ENCODE measurements at regions of chr17 and their contacts with region 1.

Region 1: GRCh38 chr17:79818026-79818758 is 21.0 kb downstream of the CBX4 start:
- DNase-seq: peak; percentile 69
- H3K4me3 ChIP-seq: no peak overlapping the region
- H3K27ac ChIP-seq: no peak overlapping the region
- H3K4me1 ChIP-seq: peaks cover 15% of the 10 kb centered on the region
- CTCF ChIP-seq: peak; percentile 27; the same call in 1 of the 2 replicates

Region 2: GRCh38 chr17:79728226-79728907 is 89.8 kb before region 1 on chr17:
- CTCF ChIA-PET with region 1: no interaction called
- POLR2A ChIA-PET with region 1: no interaction called
- intact Hi-C with region 1: no loop called
- DNase-seq: peak; percentile 94
- H3K4me3 ChIP-seq: no peak overlapping the region
- H3K27ac ChIP-seq: no peak overlapping the region
- H3K4me1 ChIP-seq: peaks cover 20% of the 10 kb centered on the region
- CTCF ChIP-seq: no peak

Region 3: GRCh38 chr17:79839363-79840268 is 21.4 kb after region 1 on chr17 and contains the start of gene CBX4:
- CTCF ChIA-PET with region 1: interaction called, 14 read pairs
- POLR2A ChIA-PET with region 1: interaction called, 20 read pairs
- intact Hi-C with region 1: no loop called
- DNase-seq: peak; percentile 98
- H3K4me3 ChIP-seq: peak within 1 kb of the TSS; percentile 84
- H3K27ac ChIP-seq: peak within 1 kb of the TSS; percentile 91
- H3K4me1 ChIP-seq: peaks cover 24% of the 10 kb centered on the region
- CTCF ChIP-seq: peak; percentile 78
- total RNA-seq, gene CBX4: 98.9 and 109 TPM in 2 replicates